ENCODE measurements at regions of chr10 and their contacts with region 1.

Region 1: DNA sequence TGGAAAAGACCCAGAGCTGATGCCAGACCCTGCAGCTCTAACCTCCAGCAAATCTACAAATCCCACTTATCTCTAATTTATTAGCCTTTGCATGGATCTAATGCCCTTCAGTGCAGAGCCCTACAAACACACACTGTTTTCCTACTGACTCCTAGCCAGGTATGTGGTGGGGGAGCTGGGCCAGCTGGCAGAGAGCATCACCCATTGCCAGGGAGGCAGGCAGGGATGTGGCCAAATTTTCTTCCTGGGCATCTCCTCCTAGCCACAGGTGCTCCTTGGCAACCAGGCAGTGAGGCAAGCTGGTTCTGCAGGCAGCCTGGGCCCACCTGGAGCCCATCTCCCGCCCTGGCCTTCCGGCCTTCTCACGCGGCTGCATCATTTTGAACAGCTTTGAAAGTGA is 55.9 kb upstream of the EMX2 start:
- DNase-seq: no peak
- ATAC-seq: no peak

Region 2: GRCh38 chr10:117997673-117998072 is 511.1 kb after region 1 on chr10:
- intact Hi-C with region 1: loop called (anchors 5 kb)
- DNase-seq: no peak
- ATAC-seq: no peak